Transverse colon (tissue), 4 donors: ENCODE measurements at regions of chr2 and their contacts with region 1.

Region 1: DNA sequence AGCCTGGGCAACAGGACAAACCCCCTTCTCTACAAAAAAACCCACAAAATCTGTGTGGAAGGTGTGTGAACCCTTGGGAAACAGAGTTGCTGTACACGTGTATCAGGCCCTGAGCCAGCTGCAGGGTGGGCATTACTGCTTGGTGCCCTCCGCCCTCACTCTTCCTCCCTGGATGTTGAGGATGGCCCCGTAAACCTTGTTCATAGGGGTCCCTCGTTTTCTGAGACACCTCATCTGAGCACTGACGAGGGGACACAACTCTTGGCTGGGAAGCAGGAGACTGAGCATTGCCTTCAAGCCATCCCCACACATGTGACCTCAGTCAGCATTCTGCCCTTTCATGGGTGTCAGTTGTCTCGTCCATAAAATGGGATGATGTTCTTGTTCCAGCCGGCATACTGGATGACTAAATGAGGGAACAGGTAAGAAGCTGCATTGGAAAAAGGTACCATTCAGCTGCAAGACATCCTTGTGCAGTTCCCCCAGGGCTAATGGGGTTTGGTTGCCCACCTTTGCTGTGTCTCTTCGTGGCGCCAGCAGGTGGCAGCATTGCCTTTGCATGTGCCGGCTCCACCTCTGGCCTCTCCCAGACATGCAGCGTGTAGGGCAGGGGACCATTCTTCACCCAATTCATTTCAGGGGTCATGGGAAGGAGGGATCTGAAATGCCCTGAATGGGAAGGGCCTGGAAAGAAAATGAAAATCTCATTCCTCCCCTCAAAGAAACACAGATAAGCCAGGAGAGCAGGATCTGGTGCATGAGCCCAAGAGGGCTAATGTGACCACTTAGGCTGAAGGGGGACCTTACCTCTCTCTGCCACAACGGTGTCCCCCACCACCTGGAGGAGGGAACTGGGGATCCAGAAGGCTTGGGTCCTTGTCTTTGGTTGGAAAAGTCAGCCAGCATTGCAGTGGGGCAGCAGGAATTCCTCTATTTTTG is 36.4 kb upstream of the HAAO start:
- DNase-seq: peak; percentile 75
- H3K4me3 ChIP-seq: no peak overlapping the region
- H3K27ac ChIP-seq: peak overlapping the region in 3 of 4 donors; percentile 20 to 40 (median 34)
- H3K4me1 ChIP-seq: peaks cover 9 to 22% (median 17%) of the 10 kb centered on the region in 4 donors
- H3K27me3 ChIP-seq: no peaks in the 10 kb centered on the region
- CTCF ChIP-seq: peak; percentile 90 to 95 (median 92)
- EP300 ChIP-seq: no peak
- POLR2A ChIP-seq: no peak

Region 2: GRCh38 chr2:42743413-42743972 is 85.3 kb before region 1 on chr2:
- in situ Hi-C with region 1: no loop called
- intact Hi-C with region 1: no loop called
- DNase-seq: no peak
- H3K4me3 ChIP-seq: no peak overlapping the region
- H3K27ac ChIP-seq: no peak overlapping the region
- H3K4me1 ChIP-seq: no peaks in the 10 kb centered on the region
- H3K27me3 ChIP-seq: no peaks in the 10 kb centered on the region
- CTCF ChIP-seq: no peak
- EP300 ChIP-seq: no peak
- POLR2A ChIP-seq: no peak

Region 3: GRCh38 chr2:42928692-42929545 is 100.2 kb after region 1 on chr2:
- in situ Hi-C with region 1: loop called in 2 of 4 experiments (anchors 25 kb)
- intact Hi-C with region 1: loop called (anchors 10 kb)
- DNase-seq: peak; percentile 79
- H3K4me3 ChIP-seq: no peak overlapping the region
- H3K27ac ChIP-seq: peak overlapping the region; percentile 87 to 92 (median 88)
- H3K4me1 ChIP-seq: peaks cover 68 to 87% (median 79%) of the 10 kb centered on the region in 4 donors
- H3K27me3 ChIP-seq: no peaks in the 10 kb centered on the region
- CTCF ChIP-seq: peak; percentile 33 to 74 (median 46)
- EP300 ChIP-seq: peak; percentile 20
- POLR2A ChIP-seq: no peak

Region 4: DNA sequence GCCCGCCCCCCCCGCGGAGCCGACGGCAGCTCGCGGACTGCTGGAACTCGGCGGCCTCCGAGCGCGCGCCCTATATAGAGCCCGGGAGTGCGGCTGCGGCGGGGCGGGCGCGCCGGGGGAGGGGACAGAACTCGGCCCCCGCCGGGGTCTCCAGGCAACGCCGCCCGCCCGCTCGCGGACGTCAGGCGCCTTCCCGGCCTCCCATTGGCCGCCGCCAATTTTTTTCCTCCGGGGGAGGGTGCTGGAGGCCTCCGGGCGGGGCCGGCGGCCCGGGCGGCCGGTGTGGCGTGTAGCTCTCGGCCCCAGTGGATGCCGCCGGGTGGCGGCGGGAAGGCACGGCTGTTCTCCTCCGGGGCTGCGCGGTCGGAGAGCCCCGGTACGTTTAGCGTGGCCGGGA is 397.8 kb after region 1 on chr2 and contains the start of gene ZFP36L2:
- in situ Hi-C with region 1: loop called in 3 of 4 experiments (anchors 10 to 25 kb)
- intact Hi-C with region 1: loop called (anchors 10 kb)
- DNase-seq: peak; percentile 97
- H3K4me3 ChIP-seq: peak within 1 kb of the TSS; percentile 85 to 91 (median 90)
- H3K27ac ChIP-seq: peak within 1 kb of the TSS; percentile 96 to 100 (median 99)
- H3K4me1 ChIP-seq: peaks cover 15 to 35% (median 32%) of the 10 kb centered on the region in 4 donors
- H3K27me3 ChIP-seq: no peaks in the 10 kb centered on the region
- CTCF ChIP-seq: peak in 1 of 5 experiments; percentile 40
- EP300 ChIP-seq: no peak
- POLR2A ChIP-seq: peak; percentile 98
- total RNA-seq, gene ZFP36L2: 114 to 305 (median 208) TPM

Region 5: DNA sequence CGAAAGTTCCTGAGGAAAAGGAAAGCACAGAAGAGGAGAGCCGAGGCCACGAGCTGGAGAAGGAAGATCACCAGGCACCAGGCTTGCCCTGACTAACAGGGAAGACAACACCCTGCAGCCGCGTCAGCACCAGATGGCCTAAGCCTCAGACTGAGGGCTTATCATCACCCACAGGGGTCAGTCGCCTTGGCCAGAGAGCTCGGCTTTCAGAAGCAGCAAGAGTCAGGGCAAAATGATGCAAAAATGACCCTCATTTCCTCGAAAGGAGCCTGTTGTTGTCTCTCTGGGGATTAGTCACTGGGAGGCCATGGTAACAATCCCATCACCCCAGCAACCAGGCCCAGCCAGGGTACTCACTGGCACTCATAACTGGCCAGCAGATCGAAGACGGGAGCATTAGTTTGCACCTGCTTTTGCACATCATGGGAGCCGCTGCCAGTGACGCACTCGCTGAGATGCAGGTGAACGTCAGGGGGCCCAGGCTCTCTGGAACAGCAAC is 440.4 kb after region 1 on chr2:
- in situ Hi-C with region 1: loop called in 1 of 4 experiments (anchors 25 kb)
- intact Hi-C with region 1: no loop called
- DNase-seq: peak; percentile 66
- H3K4me3 ChIP-seq: no peak overlapping the region
- H3K27ac ChIP-seq: peak overlapping the region; percentile 81 to 86 (median 84)
- H3K4me1 ChIP-seq: peaks cover 11 to 54% (median 30%) of the 10 kb centered on the region in 4 donors
- H3K27me3 ChIP-seq: no peaks in the 10 kb centered on the region
- CTCF ChIP-seq: no peak
- EP300 ChIP-seq: no peak
- POLR2A ChIP-seq: no peak

Region 6: GRCh38 chr2:43576981-43577892 is 748.5 kb after region 1 on chr2:
- in situ Hi-C with region 1: loop called in 3 of 4 experiments (anchors 5 to 25 kb)
- intact Hi-C with region 1: no loop called
- DNase-seq: no peak
- H3K4me3 ChIP-seq: no peak overlapping the region
- H3K27ac ChIP-seq: peak overlapping the region in 1 of 4 donors; percentile 27
- H3K4me1 ChIP-seq: no peaks in the 10 kb centered on the region
- H3K27me3 ChIP-seq: no peaks in the 10 kb centered on the region
- CTCF ChIP-seq: peak; percentile 61 to 77 (median 70)
- EP300 ChIP-seq: no peak
- POLR2A ChIP-seq: no peak